ENCODE measurements at regions of chr7 and their contacts with region 1.

Region 1: GRCh38 chr7:150448789-150449147 is 1.7 kb upstream of the GIMAP8 start:
- DNase-seq: peak; percentile 94
- ATAC-seq: peak; percentile 65
- H3K4me3 Mint-ChIP-seq: peak overlapping the region; percentile 97
- H3K27ac Mint-ChIP-seq: peak overlapping the region; percentile 100
- H3K4me1 Mint-ChIP-seq: peaks cover 46% of the 10 kb centered on the region
- H3K27me3 Mint-ChIP-seq: no peaks in the 10 kb centered on the region
- CTCF ChIP-seq: peak; percentile 95

Region 2: DNA sequence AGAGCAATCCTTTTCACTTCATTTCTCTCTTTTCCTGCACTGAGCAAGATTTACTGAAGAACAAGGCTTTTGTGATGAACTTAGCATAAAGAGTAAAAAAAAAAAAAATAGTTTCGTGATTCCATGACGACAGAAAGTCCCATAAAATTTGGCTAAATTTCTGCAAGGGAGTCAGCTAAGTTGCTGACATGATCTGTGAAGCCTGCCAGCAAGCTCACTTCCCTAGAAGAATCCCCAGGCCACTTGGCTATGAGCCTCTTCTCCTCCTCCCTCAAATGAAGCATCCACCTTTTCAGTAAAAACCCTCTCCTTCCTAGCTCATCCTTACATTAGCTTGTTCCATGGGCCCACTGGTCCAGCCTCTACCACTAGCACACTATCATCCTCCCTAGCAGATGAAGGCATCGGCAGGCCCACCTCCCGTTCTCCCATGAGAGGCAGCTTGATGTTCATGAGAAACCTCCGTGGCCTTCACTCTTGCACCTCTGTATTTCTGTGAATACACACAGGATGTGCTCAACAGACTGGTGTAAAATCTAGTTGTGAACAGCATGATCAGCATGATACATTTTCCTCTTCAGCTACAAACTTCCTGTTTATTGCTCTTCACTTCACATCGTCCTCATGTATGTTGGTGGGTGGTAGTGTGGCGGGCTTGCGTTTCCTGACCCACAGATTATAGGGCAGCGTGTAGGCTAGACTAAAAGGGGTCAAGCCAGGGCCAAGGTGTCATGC is 32.6 kb after region 1 on chr7:
- CTCF ChIA-PET with region 1: interaction called, 10 read pairs
- POLR2A ChIA-PET with region 1: interaction called, 65 read pairs
- intact Hi-C with region 1: loop called (anchors 5 kb)
- DNase-seq: peak; percentile 74
- ATAC-seq: peak; percentile 74
- H3K4me3 Mint-ChIP-seq: peak overlapping the region; percentile 67
- H3K27ac Mint-ChIP-seq: peak overlapping the region; percentile 97
- H3K4me1 Mint-ChIP-seq: peaks cover 92% of the 10 kb centered on the region
- H3K27me3 Mint-ChIP-seq: no peaks in the 10 kb centered on the region
- CTCF ChIP-seq: no peak

Region 3: DNA sequence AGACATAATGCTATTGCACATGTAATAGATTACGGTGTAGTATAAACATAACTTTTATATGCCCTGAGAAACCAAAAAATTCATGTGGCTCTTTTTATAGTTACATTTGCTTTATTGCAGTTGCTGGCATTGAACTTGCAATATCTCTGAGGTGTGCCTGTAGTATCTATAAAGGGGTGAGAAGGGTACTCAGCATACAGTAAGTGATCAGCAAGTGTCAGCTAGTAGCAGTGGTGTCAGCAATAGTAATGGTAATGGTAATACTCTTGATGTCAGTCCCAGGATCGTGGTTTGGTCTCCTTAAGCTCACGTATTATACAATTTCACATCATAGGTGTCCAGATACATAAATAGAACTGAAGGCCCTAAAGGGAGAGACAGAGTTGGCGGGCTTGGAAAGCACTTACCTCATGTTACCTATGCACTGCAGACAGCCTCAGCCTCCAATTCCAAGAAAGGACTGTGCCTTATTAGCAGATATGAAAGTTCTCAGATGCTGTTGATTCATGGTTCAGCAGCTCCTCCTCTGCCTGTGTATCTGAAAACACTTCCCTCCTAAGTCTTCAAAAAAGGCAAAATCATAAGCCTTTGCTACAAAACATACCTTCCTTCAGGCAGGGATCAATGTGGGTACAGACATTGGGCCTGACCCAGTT is 59.3 kb after region 1 on chr7:
- CTCF ChIA-PET with region 1: interaction called, 19 read pairs
- POLR2A ChIA-PET with region 1: interaction called, 157 read pairs
- intact Hi-C with region 1: no loop called
- DNase-seq: peak; percentile 58
- ATAC-seq: peak; percentile 67
- H3K4me3 Mint-ChIP-seq: peak overlapping the region; percentile 40
- H3K27ac Mint-ChIP-seq: peak overlapping the region; percentile 83
- H3K4me1 Mint-ChIP-seq: peaks cover 87% of the 10 kb centered on the region
- H3K27me3 Mint-ChIP-seq: no peaks in the 10 kb centered on the region
- CTCF ChIP-seq: no peak

Region 4: DNA sequence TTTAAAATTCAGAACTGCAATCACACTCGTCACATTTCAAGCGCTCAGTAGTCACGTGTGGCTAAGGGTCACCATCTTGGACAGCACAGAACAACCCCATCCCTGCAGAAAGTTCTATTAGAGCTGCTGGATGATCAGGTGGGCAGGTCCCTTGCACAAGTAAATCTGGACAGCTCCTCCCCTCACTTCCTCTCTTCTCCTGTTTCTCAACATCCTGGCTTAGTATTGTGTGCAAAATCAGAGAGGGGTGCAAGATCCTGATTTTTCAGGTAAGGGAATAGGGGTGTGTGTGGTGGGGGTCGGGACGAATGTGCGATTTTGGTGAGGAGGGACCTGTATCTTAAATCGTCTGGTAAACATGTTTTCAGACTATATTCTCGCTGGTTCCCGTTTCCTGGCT is 118.4 kb after region 1 on chr7 and contains the start of gene GIMAP4:
- CTCF ChIA-PET with region 1: interaction called, 41 read pairs
- POLR2A ChIA-PET with region 1: interaction called, 36 read pairs
- intact Hi-C with region 1: loop called (anchors 5 kb)
- DNase-seq: peak; percentile 51
- ATAC-seq: peak; percentile 64
- H3K4me3 Mint-ChIP-seq: peak within 1 kb of the TSS; percentile 84
- H3K27ac Mint-ChIP-seq: peak within 1 kb of the TSS; percentile 99
- H3K4me1 Mint-ChIP-seq: peaks cover 67% of the 10 kb centered on the region
- H3K27me3 Mint-ChIP-seq: no peaks in the 10 kb centered on the region
- CTCF ChIP-seq: no peak
- total RNA-seq, gene GIMAP4: 88.3 to 97.8 TPM

Region 5: GRCh38 chr7:150737265-150738055 is 288.7 kb after region 1 on chr7 and contains the start of gene GIMAP5:
- CTCF ChIA-PET with region 1: interaction called, 23 read pairs
- POLR2A ChIA-PET with region 1: interaction called, 22 read pairs
- intact Hi-C with region 1: loop called (anchors 5 kb)
- DNase-seq: peak; percentile 70
- ATAC-seq: peak; percentile 60
- H3K4me3 Mint-ChIP-seq: peak within 1 kb of the TSS; percentile 89
- H3K27ac Mint-ChIP-seq: peak within 1 kb of the TSS; percentile 97
- H3K4me1 Mint-ChIP-seq: peaks cover 72% of the 10 kb centered on the region
- H3K27me3 Mint-ChIP-seq: no peaks in the 10 kb centered on the region
- CTCF ChIP-seq: no peak
- total RNA-seq, gene GIMAP5: 37.6 to 40.7 TPM

Measured in activated CD8-positive, alpha-beta T cell treated with anti-CD3 and anti-CD28 coated beads for 36 hours (primary cell).